ENCODE measurements at regions of chr22 and their contacts with region 1.

Region 1: DNA sequence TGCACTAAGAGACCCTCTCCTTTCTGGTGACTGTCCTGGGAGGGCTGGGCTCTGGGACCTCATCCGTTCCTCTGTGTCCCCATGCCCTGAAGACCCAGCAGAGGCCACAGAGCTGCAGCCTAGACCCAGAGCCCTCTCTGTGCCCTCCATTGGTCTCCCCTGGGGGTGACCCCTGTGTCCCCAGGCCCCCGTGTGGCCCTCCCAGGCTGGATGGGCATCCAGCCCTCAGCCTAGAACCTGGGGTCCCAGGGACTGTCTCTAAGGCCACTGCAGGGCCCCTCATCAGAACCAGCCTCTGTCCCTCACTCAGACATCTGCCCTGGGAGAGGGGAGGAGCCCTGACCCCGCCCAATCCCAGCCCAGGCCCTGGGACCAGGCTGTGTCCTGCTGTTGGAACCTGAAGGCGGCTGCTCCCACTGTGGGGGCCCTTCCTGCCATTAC is 5.7 kb downstream of the IGLL1 start:
- DNase-seq: no peak
- H3K4me3 ChIP-seq: no peak overlapping the region
- H3K27ac ChIP-seq: no peak overlapping the region
- H3K4me1 ChIP-seq: no peaks in the 10 kb centered on the region
- H3K27me3 ChIP-seq: peaks cover 67% of the 10 kb centered on the region
- CTCF ChIP-seq: no peak

Region 2: DNA sequence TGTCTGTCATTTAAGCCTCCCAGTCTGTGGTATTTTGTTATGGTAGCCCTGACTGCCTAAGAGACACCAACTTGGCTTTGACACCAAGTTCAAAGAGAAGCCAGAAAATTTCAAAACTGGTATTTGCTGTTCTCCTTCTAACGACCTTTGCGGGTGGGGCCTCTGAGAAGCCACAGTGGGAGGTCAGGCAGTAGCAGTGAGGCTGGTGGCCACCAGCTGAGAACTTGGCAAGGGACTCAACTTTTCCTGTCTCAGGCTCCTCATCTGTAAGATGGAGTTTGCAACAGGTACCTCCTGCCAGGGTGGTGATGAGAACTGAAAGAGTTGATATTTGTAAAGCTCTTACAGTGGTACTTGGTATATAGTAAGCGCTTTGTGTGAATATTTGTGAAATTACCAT is 210.7 kb before region 1 on chr22:
- CTCF ChIA-PET with region 1: no interaction called
- POLR2A ChIA-PET with region 1: interaction called, 10 read pairs
- intact Hi-C with region 1: no loop called
- DNase-seq: no peak
- H3K4me3 ChIP-seq: no peak overlapping the region
- H3K27ac ChIP-seq: no peak overlapping the region
- H3K4me1 ChIP-seq: no peaks in the 10 kb centered on the region
- H3K27me3 ChIP-seq: peaks cover 88% of the 10 kb centered on the region
- CTCF ChIP-seq: no peak

Region 3: GRCh38 chr22:23467721-23468296 is 106.6 kb before region 1 on chr22:
- CTCF ChIA-PET with region 1: no interaction called
- POLR2A ChIA-PET with region 1: no interaction called
- intact Hi-C with region 1: no loop called
- DNase-seq: no peak
- H3K4me3 ChIP-seq: no peak overlapping the region
- H3K27ac ChIP-seq: no peak overlapping the region
- H3K4me1 ChIP-seq: no peaks in the 10 kb centered on the region
- H3K27me3 ChIP-seq: peaks cover 67% of the 10 kb centered on the region
- CTCF ChIP-seq: no peak